HEK293T (cell line): ENCODE measurements at regions of chr5 and their contacts with region 1.

Region 1: DNA sequence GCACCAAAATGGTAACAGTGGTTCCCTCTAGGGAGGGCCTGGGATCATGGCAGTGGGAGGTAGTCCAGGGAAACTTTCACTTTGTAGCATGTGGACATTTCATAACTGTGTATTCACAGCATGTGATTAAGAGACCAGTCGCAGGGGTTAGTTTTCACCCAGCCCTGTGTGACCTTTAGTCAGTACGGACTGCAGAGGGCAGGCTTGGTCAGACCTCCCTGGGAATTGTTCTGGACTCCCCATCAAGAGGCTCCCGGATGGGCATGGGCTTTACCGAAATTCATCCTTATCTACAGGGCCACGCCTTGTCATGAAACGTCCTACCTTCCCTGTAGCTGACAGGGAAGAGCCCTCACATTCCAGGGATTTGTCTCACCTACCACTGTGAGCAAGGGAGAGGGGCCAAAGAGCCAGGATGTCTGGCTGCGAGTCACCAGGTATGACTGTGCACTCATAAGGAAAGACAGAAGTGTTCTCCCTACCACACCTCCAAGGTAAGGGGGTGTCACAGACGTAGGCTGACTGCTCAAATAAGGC is 19.9 kb downstream of the GPX3 start:
- DNase-seq: no peak

Region 2: DNA sequence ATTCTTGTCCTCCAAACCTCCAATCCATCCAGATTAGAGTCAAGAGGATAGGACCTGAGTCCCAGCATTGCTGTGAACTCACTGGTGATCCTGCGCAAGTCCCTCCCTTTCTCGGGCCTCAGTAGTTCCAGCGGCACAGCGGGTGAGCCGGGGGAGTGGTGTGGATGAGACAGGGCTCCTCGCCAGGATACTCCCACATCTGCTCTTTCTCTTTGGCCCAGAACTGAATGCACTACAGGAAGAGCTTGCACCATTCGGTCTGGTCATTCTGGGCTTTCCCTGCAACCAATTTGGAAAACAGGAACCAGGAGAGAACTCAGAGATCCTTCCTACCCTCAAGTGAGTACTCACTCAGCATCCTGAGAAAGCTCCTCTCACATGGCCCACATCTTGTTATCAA is 13.6 kb before region 1 on chr5:
- CTCF ChIA-PET with region 1: no interaction called
- POLR2A ChIA-PET with region 1: no interaction called
- DNase-seq: no peak

Region 3: DNA sequence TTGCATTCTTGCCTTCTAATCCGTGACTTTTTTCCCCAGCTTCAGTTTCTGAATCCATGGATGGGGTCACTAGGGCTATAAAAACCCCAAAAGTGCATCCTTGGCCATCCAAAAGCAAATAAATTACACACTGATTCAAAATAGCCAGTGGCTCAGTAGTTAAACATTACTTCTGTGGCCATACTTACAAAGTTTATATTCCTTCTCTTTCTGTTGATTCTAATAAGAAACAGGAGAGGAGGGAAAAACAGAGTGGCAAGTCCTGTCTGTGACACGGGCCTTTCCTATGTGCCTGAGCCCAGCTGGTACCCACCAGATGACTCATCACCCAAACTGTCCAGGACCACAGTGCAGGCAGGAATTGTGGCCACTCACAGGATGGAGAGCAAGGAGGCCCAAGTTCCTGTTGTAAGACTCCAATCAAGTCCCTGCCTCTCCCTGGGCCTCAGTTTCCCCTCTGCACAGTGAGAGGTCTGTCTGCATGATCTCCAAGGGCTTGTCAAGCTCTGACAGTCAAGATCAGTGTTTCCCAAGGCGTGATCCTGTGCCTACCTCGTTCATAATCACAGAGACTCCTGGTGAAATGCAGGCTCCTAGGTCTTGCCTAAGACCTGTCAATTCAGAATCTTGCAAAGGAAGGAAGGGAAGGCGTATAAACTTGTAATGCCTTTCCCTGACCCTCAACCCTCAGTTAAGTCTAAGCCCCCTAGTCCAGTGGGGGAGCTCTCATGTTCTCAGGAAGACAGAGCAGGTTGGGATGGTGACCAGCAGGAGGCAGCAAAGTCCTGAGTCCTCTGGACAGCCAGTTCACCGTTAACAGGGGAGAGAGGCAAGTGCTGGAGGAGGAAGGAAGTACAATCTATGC is 11.0 kb after region 1 on chr5:
- CTCF ChIA-PET with region 1: interaction called, 16 read pairs
- POLR2A ChIA-PET with region 1: no interaction called
- DNase-seq: peak; percentile 81

Region 4: GRCh38 chr5:151174612-151175101 is 134.4 kb after region 1 on chr5:
- CTCF ChIA-PET with region 1: no interaction called
- POLR2A ChIA-PET with region 1: no interaction called
- DNase-seq: peak; percentile 3